CD4-positive, alpha-beta memory T cell (primary cell): ENCODE measurements at regions of chr3 and their contacts with region 1.

Region 1: GRCh38 chr3:155805802-155806618 is at the start of gene C3orf33:
- DNase-seq: peak; percentile 75 to 84 (median 76)
- H3K4me3 ChIP-seq: peak within 1 kb of the TSS; percentile 47 to 72
- H3K4me3 Mint-ChIP-seq: peak within 1 kb of the TSS; percentile 88 to 94 (median 91)
- H3K27ac ChIP-seq: peak within 1 kb of the TSS; percentile 74
- H3K27ac Mint-ChIP-seq: peak within 1 kb of the TSS; percentile 55 to 93 (median 87)
- H3K4me1 ChIP-seq: peaks cover 11% of the 10 kb centered on the region
- H3K4me1 Mint-ChIP-seq: peaks cover 12 to 15% (median 14%) of the 10 kb centered on the region in 4 donors
- H3K27me3 ChIP-seq: no peaks in the 10 kb centered on the region
- H3K27me3 Mint-ChIP-seq: peaks cover 7 to 8% of the 10 kb centered on the region in 2 donors
- total RNA-seq, gene C3orf33: 3.1 to 3.4 TPM

Region 2: GRCh38 chr3:155712008-155712407 is 94.0 kb before region 1 on chr3:
- CTCF ChIA-PET with region 1: no interaction called
- POLR2A ChIA-PET with region 1: no interaction called
- intact Hi-C with region 1: no loop called
- DNase-seq: no peak
- H3K4me3 ChIP-seq: no peak overlapping the region
- H3K4me3 Mint-ChIP-seq: no peak overlapping the region
- H3K27ac ChIP-seq: no peak overlapping the region
- H3K27ac Mint-ChIP-seq: no peak overlapping the region
- H3K4me1 ChIP-seq: no peaks in the 10 kb centered on the region
- H3K4me1 Mint-ChIP-seq: no peaks in the 10 kb centered on the region
- H3K27me3 ChIP-seq: no peaks in the 10 kb centered on the region
- H3K27me3 Mint-ChIP-seq: no peaks in the 10 kb centered on the region

Region 3: GRCh38 chr3:155772801-155773200 is 33.2 kb before region 1 on chr3:
- CTCF ChIA-PET with region 1: interaction called, 24 read pairs
- POLR2A ChIA-PET with region 1: no interaction called
- intact Hi-C with region 1: no loop called
- DNase-seq: no peak
- H3K4me3 ChIP-seq: no peak overlapping the region
- H3K4me3 Mint-ChIP-seq: no peak overlapping the region
- H3K27ac ChIP-seq: no peak overlapping the region
- H3K27ac Mint-ChIP-seq: no peak overlapping the region
- H3K4me1 ChIP-seq: no peaks in the 10 kb centered on the region
- H3K4me1 Mint-ChIP-seq: no peaks in the 10 kb centered on the region
- H3K27me3 ChIP-seq: no peaks in the 10 kb centered on the region
- H3K27me3 Mint-ChIP-seq: no peaks in the 10 kb centered on the region

Region 4: DNA sequence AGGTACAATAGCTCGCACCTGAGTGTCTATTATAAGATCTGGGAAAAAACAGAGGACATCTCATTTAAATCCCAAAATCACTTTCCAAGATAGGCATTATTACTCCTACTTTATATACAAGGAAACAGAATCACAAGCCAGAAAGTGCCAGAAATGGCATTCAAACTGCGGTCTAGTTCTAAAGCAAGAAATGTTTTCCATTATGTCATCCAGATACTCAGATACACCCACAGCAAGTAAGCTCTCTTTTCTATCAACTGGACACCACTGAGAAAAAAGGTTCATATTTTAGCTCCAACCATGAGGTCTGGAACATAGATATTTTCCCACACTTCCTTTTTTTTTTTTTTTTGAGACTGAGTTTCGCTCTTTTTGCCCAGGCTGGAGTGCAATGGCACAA is 40.1 kb after region 1 on chr3:
- CTCF ChIA-PET with region 1: interaction called, 56 read pairs
- POLR2A ChIA-PET with region 1: interaction called, 3 read pairs
- intact Hi-C with region 1: no loop called
- DNase-seq: no peak
- H3K4me3 ChIP-seq: no peak overlapping the region
- H3K4me3 Mint-ChIP-seq: peak overlapping the region in 5 of 8 donors; percentile 2 to 57 (median 35)
- H3K27ac ChIP-seq: no peak overlapping the region
- H3K27ac Mint-ChIP-seq: peak overlapping the region in 3 of 7 donors; percentile 25 to 67 (median 49)
- H3K4me1 ChIP-seq: peaks cover 68% of the 10 kb centered on the region
- H3K4me1 Mint-ChIP-seq: peaks cover 37 to 64% (median 51%) of the 10 kb centered on the region in 4 donors
- H3K27me3 ChIP-seq: no peaks in the 10 kb centered on the region
- H3K27me3 Mint-ChIP-seq: no peaks in the 10 kb centered on the region

Region 5: GRCh38 chr3:155859859-155860258 is 53.8 kb after region 1 on chr3:
- CTCF ChIA-PET with region 1: interaction called, 27 read pairs
- POLR2A ChIA-PET with region 1: interaction called, 7 read pairs
- intact Hi-C with region 1: no loop called
- DNase-seq: peak in 1 of 5 donors; percentile 10
- H3K4me3 ChIP-seq: no peak overlapping the region
- H3K4me3 Mint-ChIP-seq: no peak overlapping the region
- H3K27ac ChIP-seq: no peak overlapping the region
- H3K27ac Mint-ChIP-seq: peak overlapping the region in 3 of 7 donors; percentile 3 to 62 (median 4)
- H3K4me1 ChIP-seq: peaks cover 20% of the 10 kb centered on the region
- H3K4me1 Mint-ChIP-seq: peaks cover 8 to 31% (median 15%) of the 10 kb centered on the region in 4 donors
- H3K27me3 ChIP-seq: no peaks in the 10 kb centered on the region
- H3K27me3 Mint-ChIP-seq: no peaks in the 10 kb centered on the region

Region 6: DNA sequence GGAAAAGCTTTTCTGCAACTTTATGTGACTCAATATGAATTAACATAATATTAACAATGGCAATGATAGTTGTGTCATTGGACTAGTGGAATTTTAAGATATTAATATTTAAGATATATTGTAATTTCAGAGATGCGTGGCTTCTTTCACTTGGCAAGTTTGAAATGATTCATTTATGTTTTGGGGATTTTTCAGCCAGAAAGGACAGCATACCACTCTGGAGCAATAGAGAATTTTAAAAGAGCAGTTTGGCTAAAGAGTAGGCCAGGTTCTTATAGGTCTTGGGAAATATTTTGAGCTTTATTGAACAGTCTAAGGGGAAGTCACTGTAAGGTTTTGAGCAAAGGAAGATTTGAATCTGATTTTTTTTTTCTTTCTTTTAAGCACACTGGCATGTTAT is 80.9 kb after region 1 on chr3:
- CTCF ChIA-PET with region 1: interaction called, 14 read pairs
- POLR2A ChIA-PET with region 1: no interaction called
- intact Hi-C with region 1: no loop called
- DNase-seq: no peak
- H3K4me3 ChIP-seq: no peak overlapping the region
- H3K4me3 Mint-ChIP-seq: no peak overlapping the region
- H3K27ac ChIP-seq: no peak overlapping the region
- H3K27ac Mint-ChIP-seq: no peak overlapping the region
- H3K4me1 ChIP-seq: peaks cover 21% of the 10 kb centered on the region
- H3K4me1 Mint-ChIP-seq: peaks cover 37 to 58% (median 45%) of the 10 kb centered on the region in 4 donors
- H3K27me3 ChIP-seq: no peaks in the 10 kb centered on the region
- H3K27me3 Mint-ChIP-seq: no peaks in the 10 kb centered on the region

Region 7: GRCh38 chr3:155919728-155920127 is 113.7 kb after region 1 on chr3:
- CTCF ChIA-PET with region 1: interaction called, 9 read pairs
- POLR2A ChIA-PET with region 1: no interaction called
- intact Hi-C with region 1: loop called (anchors 5 kb)
- DNase-seq: no peak
- H3K4me3 ChIP-seq: no peak overlapping the region
- H3K4me3 Mint-ChIP-seq: no peak overlapping the region
- H3K27ac ChIP-seq: no peak overlapping the region
- H3K27ac Mint-ChIP-seq: no peak overlapping the region
- H3K4me1 ChIP-seq: no peaks in the 10 kb centered on the region
- H3K4me1 Mint-ChIP-seq: no peaks in the 10 kb centered on the region
- H3K27me3 ChIP-seq: no peaks in the 10 kb centered on the region
- H3K27me3 Mint-ChIP-seq: no peaks in the 10 kb centered on the region

Region 8: DNA sequence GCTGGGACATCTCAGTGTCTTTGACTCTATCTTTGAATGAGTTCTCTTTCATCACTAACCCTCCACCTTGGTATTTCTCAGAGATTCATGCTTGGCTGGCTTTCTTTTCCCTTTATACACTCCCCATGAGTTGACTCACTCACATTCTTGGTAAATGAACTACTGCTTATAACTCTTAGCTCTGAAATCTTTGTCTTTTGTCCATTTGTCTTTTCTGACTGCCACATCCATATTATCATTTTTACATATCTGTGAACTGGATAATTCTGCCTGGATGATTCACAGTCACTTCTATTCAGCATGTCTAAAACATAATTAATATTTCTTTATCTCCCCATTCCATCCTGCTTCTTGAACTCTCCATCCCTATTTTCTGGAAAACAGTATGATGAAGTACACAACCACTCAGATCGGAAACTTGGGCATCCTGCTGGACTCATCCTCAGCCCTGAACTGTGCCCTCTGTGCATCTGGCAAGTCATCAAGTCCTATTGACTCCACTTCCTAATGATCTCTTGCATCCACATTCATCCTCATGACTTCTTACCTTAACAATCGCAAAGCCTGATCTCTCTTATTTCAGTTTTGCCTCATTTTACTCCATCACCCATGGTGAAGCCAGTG is 381.2 kb after region 1 on chr3:
- CTCF ChIA-PET with region 1: no interaction called
- POLR2A ChIA-PET with region 1: no interaction called
- intact Hi-C with region 1: no loop called
- DNase-seq: no peak
- H3K4me3 ChIP-seq: no peak overlapping the region
- H3K4me3 Mint-ChIP-seq: no peak overlapping the region
- H3K27ac ChIP-seq: no peak overlapping the region
- H3K27ac Mint-ChIP-seq: no peak overlapping the region
- H3K4me1 ChIP-seq: no peaks in the 10 kb centered on the region
- H3K4me1 Mint-ChIP-seq: no peaks in the 10 kb centered on the region
- H3K27me3 ChIP-seq: no peaks in the 10 kb centered on the region
- H3K27me3 Mint-ChIP-seq: no peaks in the 10 kb centered on the region